GM12878 (cell line): ENCODE measurements at regions of chr14 and their contacts with region 1.

Region 1: DNA sequence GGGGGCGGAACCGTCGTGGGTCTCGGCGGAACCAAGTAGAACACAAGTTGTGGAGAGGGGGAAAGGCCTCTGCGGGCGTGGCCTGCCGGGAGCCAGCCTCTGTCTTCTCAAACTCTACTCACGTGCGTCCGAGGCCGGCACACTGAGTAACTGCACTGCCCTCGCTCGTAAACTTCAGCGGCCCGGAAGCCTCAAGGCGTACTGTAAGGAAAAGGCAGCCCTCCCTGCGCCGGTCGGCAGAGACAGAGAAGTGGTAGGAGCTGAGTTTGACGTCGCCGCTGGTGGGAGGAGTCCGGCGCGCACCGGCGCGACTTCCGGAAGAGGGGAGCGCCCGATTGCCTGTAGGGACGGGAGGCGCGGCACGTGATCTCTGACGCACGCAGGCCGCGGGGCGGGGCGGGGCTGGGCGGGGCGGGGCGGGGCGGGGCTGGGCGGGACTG is at the start of gene FBXO33:
- DNase-seq: peak; percentile 87
- ATAC-seq: peak; percentile 87
- H3K4me3 ChIP-seq: peak within 1 kb of the TSS; percentile 91
- H3K27ac ChIP-seq: peak within 1 kb of the TSS; percentile 99
- H3K4me1 ChIP-seq: peaks cover 10% of the 10 kb centered on the region
- H3K27me3 ChIP-seq: no peaks in the 10 kb centered on the region
- CTCF ChIP-seq: no peak
- EP300 ChIP-seq: no peak
- POLR2A ChIP-seq: no peak; the same call in 1 of the 2 replicates
- RAD21 ChIP-seq: no peak
- polyA plus RNA-seq, gene FBXO33: 5.8 to 13.5 TPM

Region 2: GRCh38 chr14:39102969-39103957 is 328.9 kb before region 1 on chr14 and contains the start of gene SEC23A:
- CTCF ChIA-PET with region 1: interaction called, 23 read pairs
- POLR2A ChIA-PET with region 1: interaction called, 4 read pairs
- RAD21 ChIA-PET with region 1: interaction called, 4 read pairs
- SMC1A ChIA-PET with region 1: interaction called, 9 read pairs
- in situ Hi-C with region 1: loop called (anchors 5 kb)
- intact Hi-C with region 1: loop called (anchors 2 kb)
- DNase-seq: no peak
- ATAC-seq: peak; percentile 97
- H3K4me3 ChIP-seq: peak within 1 kb of the TSS; percentile 84
- H3K27ac ChIP-seq: peak within 1 kb of the TSS; percentile 73
- H3K4me1 ChIP-seq: peaks cover 6% of the 10 kb centered on the region; the same call in 1 of the 2 replicates
- H3K27me3 ChIP-seq: no peaks in the 10 kb centered on the region
- CTCF ChIP-seq: no peak
- EP300 ChIP-seq: no peak
- POLR2A ChIP-seq: peak; percentile 98
- RAD21 ChIP-seq: no peak
- polyA plus RNA-seq, gene SEC23A: 13.6 to 15.2 TPM

Region 3: DNA sequence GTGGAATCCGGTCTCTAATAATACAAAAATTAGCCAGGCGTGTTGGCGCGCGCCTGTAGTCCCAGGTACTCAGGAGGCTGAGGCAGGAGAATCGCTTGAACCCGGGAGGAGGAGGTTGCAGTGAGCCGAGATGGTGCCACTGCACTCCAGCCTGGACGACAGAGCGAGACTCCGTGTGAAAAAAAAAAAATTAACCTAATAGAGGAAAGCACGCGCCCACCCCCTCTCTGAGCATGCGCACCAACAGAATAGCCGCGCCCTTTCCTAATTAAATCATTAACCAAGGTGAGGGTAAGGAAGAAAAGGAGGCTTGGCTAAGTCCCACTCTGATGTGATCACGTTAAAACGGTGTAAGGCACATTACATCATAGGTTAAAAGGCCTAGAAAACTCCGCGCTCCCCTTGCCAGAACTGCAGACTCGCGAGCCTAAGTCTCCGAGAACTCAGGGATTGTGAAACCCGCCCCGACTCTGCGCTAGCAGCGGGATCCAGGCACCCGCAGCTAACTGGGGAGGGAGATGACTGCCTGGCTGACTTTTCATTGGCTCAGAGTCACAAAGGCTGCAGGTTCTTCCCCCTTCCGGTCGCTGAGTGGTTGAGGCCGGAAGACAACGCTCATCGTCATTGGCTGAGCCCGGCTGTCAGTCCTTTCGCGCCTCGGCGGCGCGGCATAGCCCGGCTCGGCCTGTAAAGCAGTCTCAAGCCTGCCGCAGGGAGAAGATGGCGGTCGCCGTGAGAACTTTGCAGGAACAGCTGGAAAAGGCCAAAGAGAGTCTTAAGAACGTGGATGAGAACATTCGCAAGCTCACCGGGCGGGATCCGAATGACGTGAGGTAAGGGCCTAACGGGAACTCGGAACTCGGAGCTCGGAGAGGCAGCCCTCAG is 257.4 kb before region 1 on chr14 and contains the start of gene PNN:
- CTCF ChIA-PET with region 1: interaction called, 4 read pairs
- POLR2A ChIA-PET with region 1: interaction called, 3 read pairs
- RAD21 ChIA-PET with region 1: interaction called, 4 read pairs
- SMC1A ChIA-PET with region 1: interaction called, 9 read pairs
- in situ Hi-C with region 1: loop called (anchors 5 kb)
- intact Hi-C with region 1: loop called (anchors 2 kb)
- DNase-seq: peak; percentile 99
- ATAC-seq: peak; percentile 93
- H3K4me3 ChIP-seq: peak within 1 kb of the TSS; percentile 90
- H3K27ac ChIP-seq: peak within 1 kb of the TSS; percentile 90
- H3K4me1 ChIP-seq: peaks cover 7% of the 10 kb centered on the region
- H3K27me3 ChIP-seq: no peaks in the 10 kb centered on the region
- CTCF ChIP-seq: no peak
- EP300 ChIP-seq: no peak; a peak in 1 of 4 replicates
- POLR2A ChIP-seq: peak; percentile 96
- RAD21 ChIP-seq: no peak
- polyA plus RNA-seq, gene PNN: 44.2 to 55.4 TPM

Region 4: DNA sequence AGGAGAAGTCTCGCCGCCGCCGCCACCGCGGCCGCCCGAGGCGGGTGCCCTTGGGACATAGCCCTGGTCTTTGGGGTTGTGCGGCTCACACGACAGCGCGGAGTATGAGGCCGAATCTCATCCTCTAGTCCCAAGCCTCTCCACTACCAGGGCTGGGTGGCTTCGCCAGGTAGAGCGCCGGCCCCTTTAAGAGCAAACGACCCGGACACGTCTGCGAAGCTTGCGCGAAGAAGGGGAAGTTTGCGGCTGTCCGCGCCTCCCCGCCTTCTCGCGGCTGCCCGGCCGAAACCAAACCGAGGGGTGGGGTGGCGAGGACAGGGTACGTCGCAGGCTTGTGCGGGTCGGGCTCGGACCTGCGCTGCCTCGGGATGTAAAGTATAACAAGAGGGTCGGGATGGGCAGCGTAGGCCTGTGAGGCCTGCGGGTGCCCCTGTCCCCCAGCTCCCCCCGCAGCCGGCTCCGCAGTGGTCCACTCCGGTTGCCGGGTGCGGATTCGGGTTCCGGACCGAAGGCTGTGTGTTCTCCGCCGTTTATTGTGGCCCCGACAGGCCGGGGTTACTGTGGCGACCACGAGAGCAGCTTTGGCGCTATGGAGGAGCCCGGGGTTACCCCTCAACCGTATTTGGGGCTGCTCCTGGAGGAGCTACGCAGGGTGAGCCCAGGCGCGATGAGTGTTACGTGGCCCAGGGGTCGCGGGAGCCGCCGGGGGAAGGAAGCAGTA is 165.2 kb before region 1 on chr14:
- CTCF ChIA-PET with region 1: interaction called, 4 read pairs
- POLR2A ChIA-PET with region 1: interaction called, 7 read pairs
- RAD21 ChIA-PET with region 1: interaction called, 16 read pairs
- SMC1A ChIA-PET with region 1: interaction called, 9 read pairs
- in situ Hi-C with region 1: loop called (anchors 5 kb)
- intact Hi-C with region 1: loop called (anchors 2 kb)
- DNase-seq: no peak
- ATAC-seq: peak; percentile 92
- H3K4me3 ChIP-seq: peak overlapping the region; percentile 92
- H3K27ac ChIP-seq: peak overlapping the region; percentile 93
- H3K4me1 ChIP-seq: peaks cover 9% of the 10 kb centered on the region
- H3K27me3 ChIP-seq: no peaks in the 10 kb centered on the region
- CTCF ChIP-seq: no peak
- EP300 ChIP-seq: peak in 1 of 2 experiments; percentile 29; a peak in 1 of 4 replicates
- POLR2A ChIP-seq: peak; percentile 82
- RAD21 ChIP-seq: no peak

Region 5: DNA sequence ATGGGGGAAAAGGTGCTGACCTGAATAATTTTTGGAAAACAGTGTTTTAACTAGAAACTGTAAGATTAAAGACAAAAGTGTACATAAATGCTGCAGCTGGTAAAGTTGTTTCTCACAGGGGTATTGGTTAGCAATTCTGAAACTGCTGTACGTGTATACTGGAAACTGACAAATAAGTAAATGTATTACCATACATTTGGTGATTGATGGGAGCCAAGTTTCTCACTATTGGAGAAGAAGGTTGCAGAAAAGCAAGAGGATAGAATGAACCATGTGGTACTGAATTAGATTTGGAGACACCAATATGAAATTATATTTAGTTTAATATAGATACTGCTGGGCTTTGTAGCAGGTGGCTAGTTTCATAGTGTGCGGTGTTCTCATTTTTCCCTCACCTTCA is 19.6 kb after region 1 on chr14:
- CTCF ChIA-PET with region 1: interaction called, 36 read pairs
- POLR2A ChIA-PET with region 1: interaction called, 159 read pairs
- RAD21 ChIA-PET with region 1: interaction called, 159 read pairs
- SMC1A ChIA-PET with region 1: interaction called, 182 read pairs
- in situ Hi-C with region 1: no loop called
- intact Hi-C with region 1: no loop called
- DNase-seq: no peak
- ATAC-seq: peak; percentile 70
- H3K4me3 ChIP-seq: no peak overlapping the region
- H3K27ac ChIP-seq: peak overlapping the region; percentile 48; the same call in 1 of the 2 replicates
- H3K4me1 ChIP-seq: peaks cover 40% of the 10 kb centered on the region
- H3K27me3 ChIP-seq: no peaks in the 10 kb centered on the region
- CTCF ChIP-seq: no peak
- EP300 ChIP-seq: no peak
- POLR2A ChIP-seq: no peak
- RAD21 ChIP-seq: no peak